ENCODE measurements at regions of chr1 and their contacts with region 1.

Region 1: GRCh38 chr1:198363625-198364151 is 176.8 kb downstream of the ATP6V1G3 start:
- DNase-seq: no peak
- ATAC-seq: no peak
- H3K4me3 ChIP-seq: no peak overlapping the region
- H3K27ac ChIP-seq: no peak overlapping the region
- H3K4me1 ChIP-seq: no peaks in the 10 kb centered on the region
- H3K27me3 ChIP-seq: no peaks in the 10 kb centered on the region
- CTCF ChIP-seq: no peak

Region 2: GRCh38 chr1:198440842-198441241 is 77.2 kb after region 1 on chr1:
- CTCF ChIA-PET with region 1: interaction called, 10 read pairs
- POLR2A ChIA-PET with region 1: no interaction called
- in situ Hi-C with region 1: no loop called
- intact Hi-C with region 1: no loop called
- DNase-seq: no peak
- ATAC-seq: no peak
- H3K4me3 ChIP-seq: no peak overlapping the region
- H3K27ac ChIP-seq: no peak overlapping the region
- H3K4me1 ChIP-seq: peaks cover 5% of the 10 kb centered on the region
- H3K27me3 ChIP-seq: no peaks in the 10 kb centered on the region
- CTCF ChIP-seq: no peak